ENCODE measurements at regions of chr2 and their contacts with region 1.

Region 1: DNA sequence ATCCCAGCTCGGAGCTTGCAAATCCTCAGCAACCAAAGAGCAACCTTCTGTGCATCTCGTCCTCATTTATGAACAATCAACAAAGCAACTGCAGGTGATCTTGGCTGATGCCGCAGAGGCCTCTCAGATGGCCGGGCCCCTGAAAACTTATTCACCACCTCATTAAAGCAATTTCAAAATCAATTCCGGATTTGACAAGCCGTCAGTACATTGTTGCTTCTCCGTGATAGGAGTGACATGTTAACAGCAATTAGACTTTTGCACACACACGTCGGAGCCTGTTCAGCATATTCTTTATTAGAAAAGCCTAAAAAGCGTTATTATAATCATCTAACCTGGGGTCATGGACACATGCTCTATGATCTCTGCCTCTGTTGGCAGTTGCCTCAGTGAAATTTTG is 183.1 kb upstream of the CXCR4 start:
- DNase-seq: no peak
- H3K4me3 ChIP-seq: no peak overlapping the region
- H3K27ac ChIP-seq: no peak overlapping the region
- H3K4me1 ChIP-seq: no peaks in the 10 kb centered on the region
- H3K27me3 ChIP-seq: no peaks in the 10 kb centered on the region
- CTCF ChIP-seq: no peak
- POLR2A ChIP-seq: no peak

Region 2: DNA sequence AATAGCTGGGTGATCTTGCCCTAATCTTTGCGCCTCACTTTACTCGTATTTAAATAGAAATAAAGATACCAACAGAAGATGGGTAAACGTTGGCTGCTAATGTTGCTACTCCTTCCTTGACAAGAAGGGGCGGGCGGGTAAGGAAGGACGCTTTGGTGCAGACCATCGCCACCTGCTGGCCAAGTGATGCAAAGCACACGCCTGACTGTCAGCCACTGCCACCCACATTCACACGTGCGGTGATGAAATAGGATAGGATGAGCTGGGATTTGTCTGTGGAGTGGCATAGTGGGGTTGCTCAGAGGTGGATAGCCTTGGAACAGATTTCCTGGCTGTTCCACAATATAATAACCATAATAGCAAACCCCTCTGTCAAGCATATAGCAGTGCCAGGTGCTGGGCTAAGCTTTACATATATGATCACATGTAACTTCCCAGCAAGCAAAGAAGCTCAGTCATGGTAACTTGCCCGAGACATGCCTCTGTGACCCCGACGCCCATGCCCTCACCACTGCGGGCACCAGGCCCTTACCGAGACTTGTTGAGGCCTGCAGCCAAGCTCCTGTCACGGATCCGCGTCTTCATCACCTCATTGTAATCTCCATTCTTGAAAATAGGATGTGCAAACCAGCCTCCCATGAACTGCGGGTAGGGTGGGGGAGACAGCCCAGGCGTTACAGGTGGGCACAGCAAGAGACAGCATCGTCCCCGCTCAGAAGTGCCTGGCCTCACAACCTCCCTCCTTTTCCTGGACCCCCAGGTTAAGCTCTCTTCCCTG is 503.3 kb before region 1 on chr2:
- intact Hi-C with region 1: no loop called
- DNase-seq: peak in 1 of 2 donors; percentile 32
- H3K4me3 ChIP-seq: no peak overlapping the region
- H3K27ac ChIP-seq: no peak overlapping the region
- H3K4me1 ChIP-seq: no peaks in the 10 kb centered on the region
- H3K27me3 ChIP-seq: no peaks in the 10 kb centered on the region
- CTCF ChIP-seq: peak; percentile 10 to 64 (median 57)
- POLR2A ChIP-seq: no peak

Region 3: DNA sequence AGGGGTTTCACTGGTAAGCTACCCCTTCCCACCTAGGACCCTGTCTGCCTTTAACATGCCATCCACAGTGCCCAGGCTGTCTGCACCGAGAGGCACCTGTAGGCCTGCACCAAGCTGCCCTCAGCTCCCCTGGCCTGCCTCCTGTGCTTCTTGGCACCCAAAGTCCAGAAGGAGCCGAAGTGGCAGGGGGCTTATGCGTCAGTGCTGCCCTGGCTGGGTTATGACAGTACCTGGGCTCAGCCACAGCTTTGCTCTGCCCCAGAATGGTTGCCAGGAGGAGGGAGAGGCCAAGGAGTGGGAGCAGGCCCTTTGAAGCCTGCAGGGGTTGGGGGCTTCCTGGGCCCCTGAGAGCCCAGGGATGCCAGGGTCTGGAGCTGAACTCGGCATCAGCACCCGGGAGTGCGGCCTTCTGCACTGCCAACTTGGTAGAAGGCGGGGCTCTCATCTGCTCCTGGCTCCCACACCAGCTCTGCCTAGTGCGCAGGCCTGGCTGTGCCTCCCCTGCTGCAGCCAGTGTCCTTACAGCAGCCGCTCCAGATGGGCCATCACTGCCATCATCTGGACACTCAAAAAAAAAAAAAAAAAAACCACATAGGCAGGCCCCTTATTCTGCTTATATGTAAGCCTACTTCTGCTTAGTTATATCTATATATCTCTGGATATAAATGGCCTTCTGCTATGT is 619.8 kb after region 1 on chr2:
- intact Hi-C with region 1: loop called (anchors 5 kb)
- DNase-seq: no peak
- H3K4me3 ChIP-seq: no peak overlapping the region
- H3K27ac ChIP-seq: no peak overlapping the region
- H3K4me1 ChIP-seq: no peaks in the 10 kb centered on the region
- H3K27me3 ChIP-seq: no peaks in the 10 kb centered on the region
- CTCF ChIP-seq: no peak
- POLR2A ChIP-seq: no peak

Region 4: GRCh38 chr2:137287936-137288639 is 987.1 kb after region 1 on chr2:
- intact Hi-C with region 1: no loop called
- DNase-seq: no peak
- H3K4me3 ChIP-seq: no peak overlapping the region
- H3K27ac ChIP-seq: no peak overlapping the region
- H3K4me1 ChIP-seq: no peaks in the 10 kb centered on the region
- H3K27me3 ChIP-seq: no peaks in the 10 kb centered on the region
- CTCF ChIP-seq: no peak
- POLR2A ChIP-seq: no peak